Heart left ventricle (tissue), 16 donors: ENCODE measurements at regions of chr12 and their contacts with region 1.

Region 1: GRCh38 chr12:98373025-98373554 is 142.3 kb upstream of the TMPO start:
- DNase-seq: no peak
- ATAC-seq: no peak
- H3K4me3 ChIP-seq: no peak overlapping the region
- H3K27ac ChIP-seq: no peak overlapping the region
- H3K4me1 ChIP-seq: peaks cover 0 to 8% (median 0%) of the 10 kb centered on the region in 12 donors
- H3K27me3 ChIP-seq: peaks cover 0 to 4% (median 0%) of the 10 kb centered on the region in 9 donors
- CTCF ChIP-seq: peak; percentile 24 to 63 (median 42)
- POLR2A ChIP-seq: no peak

Region 2: GRCh38 chr12:96587691-96588090 is 1785.4 kb before region 1 on chr12:
- intact Hi-C with region 1: loop called in 1 of 10 experiments (anchors 10 kb)
- DNase-seq: no peak
- ATAC-seq: no peak
- H3K4me3 ChIP-seq: no peak overlapping the region
- H3K27ac ChIP-seq: no peak overlapping the region
- H3K4me1 ChIP-seq: no peaks in the 10 kb centered on the region
- H3K27me3 ChIP-seq: no peaks in the 10 kb centered on the region
- CTCF ChIP-seq: no peak
- POLR2A ChIP-seq: no peak

Region 3: DNA sequence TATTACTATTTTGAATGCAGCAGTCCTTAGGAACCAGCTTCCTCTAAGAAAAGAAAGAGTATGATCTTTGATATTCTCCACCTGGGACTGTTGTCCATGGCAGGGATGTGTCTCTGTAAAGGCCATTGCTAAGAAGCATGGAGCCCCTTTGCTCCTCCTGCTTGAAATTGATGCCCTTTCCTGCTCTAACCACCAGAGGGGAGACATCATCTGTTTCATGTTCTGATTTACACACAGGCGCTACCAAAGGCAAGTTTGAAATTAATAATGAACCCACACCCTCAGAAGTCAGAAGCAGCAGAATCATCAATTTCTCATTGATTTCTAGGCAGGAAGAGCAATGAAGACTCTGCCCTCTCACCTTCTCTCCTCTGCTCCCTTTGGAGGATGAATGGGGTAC is 656.7 kb before region 1 on chr12:
- intact Hi-C with region 1: loop called in 1 of 10 experiments (anchors 10 kb)
- DNase-seq: no peak
- ATAC-seq: no peak
- H3K4me3 ChIP-seq: no peak overlapping the region
- H3K27ac ChIP-seq: no peak overlapping the region
- H3K4me1 ChIP-seq: no peaks in the 10 kb centered on the region
- H3K27me3 ChIP-seq: no peaks in the 10 kb centered on the region
- CTCF ChIP-seq: peak in 7 of 12 donors; percentile 17 to 46 (median 38)
- POLR2A ChIP-seq: no peak

Region 4: DNA sequence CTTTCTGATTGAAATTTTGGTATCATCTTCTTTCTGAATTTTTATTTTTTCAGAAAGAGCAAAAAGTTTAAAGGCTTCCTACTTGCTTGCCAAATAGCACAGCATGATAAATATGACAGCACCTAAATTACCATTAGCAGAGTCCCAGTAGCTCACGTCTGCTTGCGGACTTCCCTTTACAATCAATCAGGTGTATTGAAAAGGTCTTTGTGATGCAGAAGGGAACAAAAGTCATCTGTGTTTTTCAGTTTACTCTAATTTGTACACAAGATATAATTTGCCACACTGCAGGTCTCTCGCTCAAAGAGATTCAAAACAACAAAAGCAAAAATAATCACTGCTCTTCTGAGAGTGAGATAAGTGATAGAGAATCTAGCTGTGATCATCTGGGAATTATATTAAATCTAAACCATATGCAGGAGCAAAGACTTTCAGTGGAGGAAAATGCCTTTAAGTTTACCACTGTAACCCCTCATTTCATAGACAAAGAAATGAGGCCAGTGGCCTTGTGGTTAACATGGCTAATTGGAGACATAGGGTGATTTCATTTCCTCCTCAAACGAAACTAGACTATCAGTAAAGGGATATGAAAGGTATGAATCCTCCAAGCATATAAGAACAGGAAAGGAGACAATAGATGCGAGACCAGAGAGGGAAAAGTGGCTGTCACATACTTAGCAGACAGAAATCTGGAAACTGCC is 98.5 kb before region 1 on chr12:
- intact Hi-C with region 1: no loop called
- DNase-seq: no peak
- ATAC-seq: no peak
- H3K4me3 ChIP-seq: no peak overlapping the region
- H3K27ac ChIP-seq: no peak overlapping the region
- H3K4me1 ChIP-seq: no peaks in the 10 kb centered on the region
- H3K27me3 ChIP-seq: no peaks in the 10 kb centered on the region
- CTCF ChIP-seq: no peak
- POLR2A ChIP-seq: no peak